T-cell (primary cell): ENCODE measurements at regions of chr16 and their contacts with region 1.

Region 1: DNA sequence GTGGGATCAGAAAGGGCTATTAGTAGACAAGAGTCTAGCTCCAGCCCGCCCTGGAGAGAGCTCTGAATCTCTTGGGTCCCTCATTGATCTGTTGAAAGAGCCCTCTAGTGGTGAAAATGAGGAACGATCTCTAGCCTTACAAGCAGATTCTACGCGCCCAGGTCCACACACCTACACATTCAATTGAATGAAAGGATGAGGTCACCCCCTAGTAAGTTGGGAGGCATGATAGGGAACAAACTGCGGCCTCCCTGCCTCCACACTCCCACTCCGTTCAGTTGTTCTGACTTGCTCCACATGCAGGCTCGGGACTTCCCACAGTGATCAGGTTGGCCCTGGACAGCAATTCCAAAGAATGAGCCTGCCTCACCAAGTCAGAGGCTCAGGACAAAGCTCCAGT is 2.9 kb upstream of the CACNG3 start:
- DNase-seq: peak in 24 of 35 experiments; percentile 1 to 69 (median 14)
- ATAC-seq: peak in 2 of 4 experiments; percentile 50 to 62
- H3K4me3 ChIP-seq: no peak overlapping the region
- H3K4me3 Mint-ChIP-seq: no peak overlapping the region
- H3K27ac ChIP-seq: no peak overlapping the region
- H3K27ac Mint-ChIP-seq: no peak overlapping the region
- H3K4me1 ChIP-seq: no peaks in the 10 kb centered on the region
- H3K4me1 Mint-ChIP-seq: peaks cover 0 to 4% (median 2%) of the 10 kb centered on the region in 3 donors
- H3K27me3 ChIP-seq: peaks cover 21 to 23% of the 10 kb centered on the region in 2 experiments
- H3K27me3 Mint-ChIP-seq: peaks cover 49 to 53% of the 10 kb centered on the region in 2 donors

Region 2: GRCh38 chr16:22353191-22353919 is 1899.8 kb before region 1 on chr16:
- CTCF ChIA-PET with region 1: interaction called in 1 of 2 experiments, 15 read pairs
- POLR2A ChIA-PET with region 1: no interaction called
- DNase-seq: peak in 1 of 35 experiments; percentile 53
- ATAC-seq: peak; percentile 22 to 37 (median 28)
- H3K4me3 ChIP-seq: no peak overlapping the region
- H3K4me3 Mint-ChIP-seq: peak overlapping the region; percentile 7 to 33 (median 26)
- H3K27ac ChIP-seq: peak overlapping the region; percentile 46
- H3K27ac Mint-ChIP-seq: peak overlapping the region; percentile 85 to 89
- H3K4me1 ChIP-seq: peaks cover 40 to 55% of the 10 kb centered on the region in 2 experiments
- H3K4me1 Mint-ChIP-seq: peaks cover 59 to 69% (median 59%) of the 10 kb centered on the region in 3 donors
- H3K27me3 ChIP-seq: no peaks in the 10 kb centered on the region
- H3K27me3 Mint-ChIP-seq: no peaks in the 10 kb centered on the region

Region 3: GRCh38 chr16:23742766-23743165 is 510.4 kb before region 1 on chr16:
- CTCF ChIA-PET with region 1: interaction called in 1 of 2 experiments, 11 read pairs
- POLR2A ChIA-PET with region 1: no interaction called
- DNase-seq: no peak
- ATAC-seq: no peak
- H3K4me3 ChIP-seq: no peak overlapping the region
- H3K4me3 Mint-ChIP-seq: no peak overlapping the region
- H3K27ac ChIP-seq: no peak overlapping the region
- H3K27ac Mint-ChIP-seq: no peak overlapping the region
- H3K4me1 ChIP-seq: no peaks in the 10 kb centered on the region
- H3K4me1 Mint-ChIP-seq: no peaks in the 10 kb centered on the region
- H3K27me3 ChIP-seq: peaks cover 6 to 22% of the 10 kb centered on the region in 2 experiments
- H3K27me3 Mint-ChIP-seq: peaks cover 32 to 51% of the 10 kb centered on the region in 2 donors

Region 4: GRCh38 chr16:24041826-24042631 is 211.2 kb before region 1 on chr16:
- CTCF ChIA-PET with region 1: interaction called in 1 of 2 experiments, 35 read pairs
- POLR2A ChIA-PET with region 1: no interaction called
- DNase-seq: peak; percentile 40 to 83 (median 69)
- ATAC-seq: peak; percentile 57 to 86 (median 68)
- H3K4me3 ChIP-seq: no peak overlapping the region
- H3K4me3 Mint-ChIP-seq: no peak overlapping the region
- H3K27ac ChIP-seq: no peak overlapping the region
- H3K27ac Mint-ChIP-seq: no peak overlapping the region
- H3K4me1 ChIP-seq: peaks cover 0 to 9% of the 10 kb centered on the region in 2 experiments
- H3K4me1 Mint-ChIP-seq: peaks cover 9 to 21% (median 12%) of the 10 kb centered on the region in 3 donors
- H3K27me3 ChIP-seq: no peaks in the 10 kb centered on the region
- H3K27me3 Mint-ChIP-seq: no peaks in the 10 kb centered on the region

Region 5: GRCh38 chr16:24273473-24274182 is 20.4 kb after region 1 on chr16:
- CTCF ChIA-PET with region 1: interaction called in 1 of 2 experiments, 10 read pairs
- POLR2A ChIA-PET with region 1: no interaction called
- DNase-seq: no peak
- ATAC-seq: no peak
- H3K4me3 ChIP-seq: no peak overlapping the region
- H3K4me3 Mint-ChIP-seq: no peak overlapping the region
- H3K27ac ChIP-seq: no peak overlapping the region
- H3K27ac Mint-ChIP-seq: no peak overlapping the region
- H3K4me1 ChIP-seq: no peaks in the 10 kb centered on the region
- H3K4me1 Mint-ChIP-seq: no peaks in the 10 kb centered on the region
- H3K27me3 ChIP-seq: peaks cover 0 to 14% of the 10 kb centered on the region in 2 experiments
- H3K27me3 Mint-ChIP-seq: peaks cover 39 to 51% of the 10 kb centered on the region in 2 donors

Region 6: DNA sequence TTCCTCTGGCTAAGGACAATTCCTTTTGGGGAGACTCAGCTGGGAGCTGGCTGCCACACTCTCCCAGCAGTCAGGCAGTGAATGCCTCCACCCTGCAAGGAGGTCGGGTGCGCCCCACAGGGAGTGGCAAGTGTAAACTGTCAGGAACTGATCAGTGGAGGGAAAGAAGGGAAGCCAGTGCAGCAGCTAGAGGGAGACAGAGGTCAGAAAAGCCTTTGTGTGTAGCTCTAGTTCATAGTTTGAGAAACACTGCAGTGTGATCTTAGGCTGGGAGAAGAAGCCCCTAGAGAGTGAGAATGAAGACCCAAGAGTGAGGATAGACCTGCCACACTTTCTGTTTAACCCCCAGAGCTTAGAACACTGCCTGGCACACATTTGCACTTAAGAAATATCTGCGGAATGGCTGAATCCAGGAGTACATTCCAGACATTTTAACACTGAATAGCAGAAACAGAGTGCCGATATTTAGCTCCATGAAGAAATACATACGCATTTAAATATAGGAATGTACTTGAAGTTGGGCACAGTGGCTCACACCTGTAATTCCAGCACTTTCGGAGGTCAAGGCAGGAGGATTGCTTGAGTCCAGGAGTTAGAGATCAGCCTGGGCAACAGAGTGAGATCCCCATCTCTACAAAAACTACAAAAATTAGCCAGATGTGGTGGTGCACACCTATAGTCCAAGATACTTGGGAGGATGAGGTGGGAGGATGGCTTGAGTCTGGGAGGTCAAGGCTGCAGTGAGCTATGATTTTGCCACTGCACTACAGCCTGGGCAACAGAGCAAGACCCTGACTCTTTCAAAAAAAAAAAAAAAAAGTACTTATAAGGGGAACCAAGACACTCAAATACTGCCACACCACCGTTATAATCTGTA is 581.5 kb after region 1 on chr16:
- CTCF ChIA-PET with region 1: no interaction called
- POLR2A ChIA-PET with region 1: interaction called in 1 of 2 experiments, 11 read pairs
- DNase-seq: no peak
- ATAC-seq: no peak
- H3K4me3 ChIP-seq: no peak overlapping the region
- H3K4me3 Mint-ChIP-seq: no peak overlapping the region
- H3K27ac ChIP-seq: no peak overlapping the region
- H3K27ac Mint-ChIP-seq: no peak overlapping the region
- H3K4me1 ChIP-seq: no peaks in the 10 kb centered on the region
- H3K4me1 Mint-ChIP-seq: no peaks in the 10 kb centered on the region
- H3K27me3 ChIP-seq: no peaks in the 10 kb centered on the region
- H3K27me3 Mint-ChIP-seq: no peaks in the 10 kb centered on the region